ENCODE measurements at regions of chr3 and their contacts with region 1.

Region 1: DNA sequence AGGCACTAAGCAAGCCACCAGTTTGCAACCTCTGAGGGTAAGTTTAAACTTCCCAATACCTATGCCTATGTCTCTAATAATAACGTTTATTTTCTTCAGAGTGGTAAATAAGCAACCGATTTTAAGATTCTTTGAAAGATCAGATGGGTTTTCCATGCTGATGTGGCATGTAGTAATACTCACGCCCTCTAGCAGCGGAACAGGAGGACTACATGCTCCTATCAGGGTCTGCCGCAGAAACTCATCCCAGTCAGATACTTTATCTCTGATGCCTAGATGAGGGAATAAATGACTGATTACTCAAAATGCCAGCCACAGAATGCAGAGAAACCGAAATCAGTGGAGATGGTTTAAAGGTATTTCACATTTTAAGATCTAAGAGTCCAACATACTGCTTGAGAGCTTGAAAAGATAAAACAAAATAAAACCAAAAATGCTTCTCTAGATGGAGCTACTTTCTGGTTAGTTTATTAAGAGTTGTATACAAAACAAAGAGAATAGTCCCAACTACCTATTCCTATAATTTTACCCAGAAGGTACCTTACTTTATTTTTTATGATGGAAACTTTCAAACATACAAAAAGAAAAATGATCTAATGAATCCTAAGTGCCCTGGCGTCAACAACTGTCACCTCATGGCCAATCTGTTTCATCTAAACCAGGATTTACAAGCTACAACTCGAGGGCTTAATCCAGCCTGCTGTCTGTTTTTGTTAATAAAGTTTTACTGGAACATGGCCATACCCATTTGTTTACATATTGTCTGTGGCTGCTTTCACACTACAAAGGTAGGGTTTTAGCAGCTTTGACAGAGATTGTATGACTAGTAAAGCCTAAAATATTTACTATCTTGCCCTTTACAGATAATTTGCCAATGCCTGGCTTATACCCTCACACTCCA is 37.5 kb upstream of the STIMATE start:
- DNase-seq: no peak

Region 2: GRCh38 chr3:52742418-52743041 is 192.3 kb before region 1 on chr3:
- intact Hi-C with region 1: loop called in 1 of 2 experiments (anchors 10 kb)
- DNase-seq: no peak

Region 3: GRCh38 chr3:52851348-52851747 is 83.5 kb before region 1 on chr3:
- intact Hi-C with region 1: loop called in 1 of 2 experiments (anchors 10 kb)
- DNase-seq: no peak

Region 4: DNA sequence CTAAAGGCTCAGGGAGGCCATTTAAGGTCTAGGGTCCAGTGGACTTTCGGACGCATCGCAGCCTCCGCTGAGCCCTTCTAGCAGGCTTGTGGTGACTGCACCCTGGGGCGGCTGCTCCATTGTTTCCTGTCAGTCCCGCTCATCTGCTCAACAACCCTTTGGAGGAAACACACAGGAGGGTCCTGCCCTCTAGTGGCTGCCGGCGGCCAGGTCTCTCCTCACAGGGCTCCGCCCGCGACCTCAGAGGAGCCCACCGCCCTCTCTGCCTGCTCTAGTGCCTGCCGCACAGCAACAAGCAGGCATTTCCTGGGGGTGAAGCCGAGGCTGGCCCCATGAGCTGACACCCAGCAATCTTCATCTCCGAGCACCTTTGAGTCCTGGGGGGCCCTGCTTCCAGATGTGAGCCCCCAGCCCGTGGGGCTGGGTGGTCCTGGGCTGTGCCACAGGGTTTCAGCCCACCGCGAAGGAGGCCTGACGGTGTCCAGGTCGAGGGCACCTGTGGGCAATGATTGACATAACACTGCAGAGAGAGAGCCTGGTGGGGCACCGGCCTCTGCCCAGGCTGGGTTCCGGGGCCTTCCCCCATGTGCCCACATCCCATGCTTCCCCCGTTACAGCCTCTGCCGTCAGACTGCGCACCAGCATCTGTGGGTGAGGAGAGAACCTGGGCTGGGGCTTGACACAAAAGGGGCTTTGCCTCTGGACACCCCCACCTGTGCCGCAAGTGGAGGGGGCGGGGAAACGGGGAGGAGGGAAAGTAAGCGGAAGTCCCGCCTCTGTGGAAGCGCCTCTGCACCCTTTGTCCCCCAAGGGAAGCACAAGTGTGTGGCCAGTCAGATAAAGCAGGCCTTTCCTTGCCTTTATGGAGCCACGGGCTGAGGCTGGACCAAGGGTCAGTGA is 138.0 kb after region 1 on chr3:
- intact Hi-C with region 1: loop called in 1 of 2 experiments (anchors 10 kb)
- DNase-seq: peak; percentile 95

Region 5: GRCh38 chr3:53089511-53089910 is 154.6 kb after region 1 on chr3:
- intact Hi-C with region 1: no loop called
- DNase-seq: no peak

Region 6: GRCh38 chr3:53180305-53181023 is 245.6 kb after region 1 on chr3:
- intact Hi-C with region 1: no loop called
- DNase-seq: no peak

Region 7: GRCh38 chr3:53744351-53744750 is 809.5 kb after region 1 on chr3:
- intact Hi-C with region 1: no loop called
- DNase-seq: no peak

Measured in posterior vena cava (tissue), 2 donors.